ENCODE measurements at regions of chr3 and their contacts with region 1.

Region 1: GRCh38 chr3:50611464-50612233 is at the start of gene CISH:
- DNase-seq: peak; percentile 99
- H3K4me3 Mint-ChIP-seq: peak within 1 kb of the TSS; percentile 96
- H3K27ac Mint-ChIP-seq: peak within 1 kb of the TSS; percentile 100
- H3K4me1 Mint-ChIP-seq: peaks cover 36% of the 10 kb centered on the region
- H3K27me3 Mint-ChIP-seq: no peaks in the 10 kb centered on the region
- total RNA-seq, gene CISH: 136 to 138 TPM

Region 2: DNA sequence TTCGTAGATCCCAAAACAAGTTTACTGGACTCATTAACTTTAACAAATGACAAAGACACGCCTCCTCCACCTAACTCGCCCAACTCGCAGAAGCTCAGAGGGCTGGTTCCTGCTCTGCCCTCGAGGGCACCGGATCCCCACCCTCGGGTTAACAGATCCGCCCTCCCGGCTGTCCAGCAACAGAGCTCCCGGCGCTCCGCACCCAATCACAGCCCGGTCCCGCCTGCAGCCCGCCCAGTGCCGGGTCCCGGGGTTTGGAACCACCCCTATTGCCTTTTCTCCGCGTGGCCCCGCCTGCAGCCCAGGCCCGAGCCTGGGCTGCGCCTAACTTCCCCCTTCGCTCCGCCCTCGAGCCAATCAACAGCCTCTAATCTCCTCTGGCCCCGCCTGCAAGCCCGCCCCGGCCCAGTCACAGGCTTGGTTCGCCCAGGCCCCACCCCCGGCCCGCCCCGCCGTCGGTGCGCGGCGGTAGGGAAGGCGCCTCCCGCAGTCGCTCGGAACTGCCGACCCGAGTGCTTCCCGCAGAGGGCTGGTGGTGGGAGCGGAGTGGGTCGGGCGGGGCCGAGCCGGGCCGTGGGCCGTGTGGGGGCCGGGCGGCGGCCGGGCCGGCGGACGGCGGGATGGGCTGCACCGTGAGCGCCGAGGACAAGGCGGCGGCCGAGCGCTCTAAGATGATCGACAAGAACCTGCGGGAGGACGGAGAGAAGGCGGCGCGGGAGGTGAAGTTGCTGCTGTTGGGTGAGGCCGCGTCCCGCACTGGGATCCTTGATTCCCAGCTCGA is 375.7 kb before region 1 on chr3 and contains the start of gene GNAI2:
- CTCF ChIA-PET with region 1: no interaction called
- intact Hi-C with region 1: loop called (anchors 5 kb)
- DNase-seq: peak; percentile 99
- H3K4me3 Mint-ChIP-seq: peak within 1 kb of the TSS; percentile 95
- H3K27ac Mint-ChIP-seq: peak within 1 kb of the TSS; percentile 92
- H3K4me1 Mint-ChIP-seq: peaks cover 33% of the 10 kb centered on the region
- H3K27me3 Mint-ChIP-seq: no peaks in the 10 kb centered on the region
- total RNA-seq, gene GNAI2: 272 to 276 TPM

Region 3: DNA sequence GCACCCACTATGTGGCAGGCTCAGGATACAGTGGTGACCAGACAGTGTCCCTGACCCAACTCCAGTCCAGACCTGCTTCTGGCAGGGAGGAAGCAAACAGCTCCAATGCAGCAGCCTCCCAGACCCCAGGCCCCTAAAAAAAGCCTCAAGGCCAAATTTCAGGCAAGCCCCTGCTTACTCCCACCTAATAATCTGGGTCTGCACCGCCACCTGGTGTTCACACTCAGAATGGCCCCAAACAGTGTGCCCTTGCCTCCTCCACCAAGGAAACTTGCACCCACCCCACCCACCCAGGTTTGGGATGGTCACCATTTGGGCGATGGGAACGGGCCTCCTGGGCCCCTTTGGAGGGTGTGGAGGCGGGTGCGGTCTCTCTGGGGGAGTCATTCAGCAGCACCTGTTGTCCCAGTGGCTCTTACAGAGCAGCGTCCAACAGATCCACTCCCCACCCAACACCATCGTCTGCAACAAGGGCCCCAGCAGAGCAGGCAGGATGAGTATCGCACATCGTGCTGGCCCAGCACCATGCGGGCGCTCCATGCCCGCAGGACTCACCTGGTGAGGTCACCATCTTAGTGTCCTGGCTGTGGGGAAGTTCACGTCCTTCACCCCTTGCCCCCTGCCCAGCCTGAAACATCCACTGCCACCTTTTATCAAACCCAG is 61.4 kb before region 1 on chr3:
- CTCF ChIA-PET with region 1: interaction called, 5 read pairs
- intact Hi-C with region 1: loop called (anchors 1 kb)
- DNase-seq: peak; percentile 83
- H3K4me3 Mint-ChIP-seq: no peak overlapping the region
- H3K27ac Mint-ChIP-seq: no peak overlapping the region
- H3K4me1 Mint-ChIP-seq: no peaks in the 10 kb centered on the region
- H3K27me3 Mint-ChIP-seq: no peaks in the 10 kb centered on the region

Region 4: GRCh38 chr3:50627407-50628051 is 15.9 kb after region 1 on chr3:
- CTCF ChIA-PET with region 1: interaction called, 32 read pairs
- intact Hi-C with region 1: loop called (anchors 1 kb)
- DNase-seq: peak; percentile 62
- H3K4me3 Mint-ChIP-seq: no peak overlapping the region
- H3K27ac Mint-ChIP-seq: peak overlapping the region; percentile 79
- H3K4me1 Mint-ChIP-seq: peaks cover 98% of the 10 kb centered on the region
- H3K27me3 Mint-ChIP-seq: no peaks in the 10 kb centered on the region

Region 5: GRCh38 chr3:50724831-50725230 is 113.2 kb after region 1 on chr3:
- CTCF ChIA-PET with region 1: no interaction called
- intact Hi-C with region 1: no loop called
- DNase-seq: no peak
- H3K4me3 Mint-ChIP-seq: no peak overlapping the region
- H3K27ac Mint-ChIP-seq: no peak overlapping the region
- H3K4me1 Mint-ChIP-seq: no peaks in the 10 kb centered on the region
- H3K27me3 Mint-ChIP-seq: peaks cover 6% of the 10 kb centered on the region

Region 6: DNA sequence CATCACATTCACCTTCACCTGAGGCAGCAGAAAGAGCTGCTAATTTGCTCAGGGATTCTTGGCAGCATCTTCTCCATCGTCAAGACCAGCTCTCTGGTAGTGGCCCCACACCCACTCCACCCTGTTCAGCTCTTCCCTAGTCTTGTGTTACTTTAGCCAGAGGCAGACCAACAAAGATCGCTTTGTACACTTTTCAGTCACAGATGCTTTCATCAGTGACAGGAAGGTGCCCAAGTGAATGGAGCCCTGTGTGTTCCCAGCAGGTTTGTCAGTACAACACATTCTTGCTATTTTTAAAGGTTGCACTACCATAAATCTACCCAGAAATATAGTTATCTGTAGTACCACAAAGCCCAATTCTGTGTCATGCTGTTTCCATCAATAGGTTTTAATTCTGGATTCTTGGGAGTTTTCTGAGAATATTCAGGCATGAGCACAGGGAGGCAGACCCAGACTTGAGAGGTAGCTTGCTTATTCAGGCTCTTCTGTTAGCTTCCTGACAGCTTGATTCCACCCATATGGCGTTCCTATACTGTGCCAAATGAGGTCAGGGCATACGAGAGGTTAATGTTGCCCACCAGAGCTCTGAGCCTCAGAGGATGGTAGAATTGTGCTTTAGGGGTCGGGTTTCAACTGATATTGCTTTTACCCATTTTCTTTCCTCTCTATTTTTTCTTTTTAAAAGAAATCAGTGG is 663.6 kb after region 1 on chr3:
- CTCF ChIA-PET with region 1: no interaction called
- intact Hi-C with region 1: loop called (anchors 2 kb)
- DNase-seq: no peak
- H3K4me3 Mint-ChIP-seq: no peak overlapping the region
- H3K27ac Mint-ChIP-seq: no peak overlapping the region
- H3K4me1 Mint-ChIP-seq: peaks cover 24% of the 10 kb centered on the region
- H3K27me3 Mint-ChIP-seq: no peaks in the 10 kb centered on the region

Region 7: DNA sequence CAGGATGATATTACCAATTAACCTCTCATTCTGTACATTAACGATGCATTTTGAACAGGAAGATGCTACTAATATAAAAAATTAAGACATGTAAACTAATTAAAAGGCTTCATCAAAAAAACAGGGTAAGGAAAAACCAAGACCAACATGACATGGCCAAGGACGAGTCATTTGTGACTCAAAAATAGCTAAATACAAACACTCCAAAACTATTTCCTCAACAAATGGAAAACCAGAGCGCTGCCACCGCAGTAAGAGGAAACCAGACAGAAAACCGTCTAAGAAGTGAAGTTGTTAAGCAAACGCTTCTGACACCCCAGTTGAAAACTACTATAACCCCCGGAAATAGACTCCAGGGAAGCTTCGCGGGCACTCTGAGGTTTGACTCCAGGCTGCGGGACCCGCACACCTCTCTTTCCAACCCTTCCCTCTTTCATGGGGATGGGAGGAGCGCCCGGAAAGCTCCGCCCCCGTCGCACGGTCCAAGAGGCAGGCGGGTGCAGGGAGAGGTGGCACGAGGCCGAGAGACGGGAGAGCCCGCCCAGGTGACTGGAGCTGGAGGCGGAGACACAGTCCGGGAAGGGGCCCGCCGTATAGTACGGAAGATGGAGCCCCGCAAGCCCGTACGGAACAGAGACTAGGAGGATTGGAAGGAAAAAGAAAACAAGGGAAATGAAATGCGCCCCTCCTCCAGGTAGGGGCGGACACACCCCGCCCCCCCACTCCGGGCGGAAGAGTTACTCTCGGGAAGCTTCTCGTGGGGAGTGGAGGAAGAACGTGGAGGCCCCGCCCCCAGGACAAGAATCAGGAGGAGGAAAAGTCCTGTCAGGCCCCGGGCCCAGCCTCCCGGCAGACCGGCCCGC is 887.5 kb after region 1 on chr3:
- CTCF ChIA-PET with region 1: no interaction called
- intact Hi-C with region 1: loop called (anchors 2 kb)
- DNase-seq: peak; percentile 91
- H3K4me3 Mint-ChIP-seq: peak overlapping the region; percentile 98
- H3K27ac Mint-ChIP-seq: peak overlapping the region; percentile 98
- H3K4me1 Mint-ChIP-seq: peaks cover 21% of the 10 kb centered on the region
- H3K27me3 Mint-ChIP-seq: no peaks in the 10 kb centered on the region

Region 8: GRCh38 chr3:51538459-51539290 is 927.0 kb after region 1 on chr3 and contains the start of gene RAD54L2:
- CTCF ChIA-PET with region 1: no interaction called
- intact Hi-C with region 1: no loop called
- DNase-seq: peak; percentile 83
- H3K4me3 Mint-ChIP-seq: peak within 1 kb of the TSS; percentile 91
- H3K27ac Mint-ChIP-seq: peak within 1 kb of the TSS; percentile 89
- H3K4me1 Mint-ChIP-seq: peaks cover 34% of the 10 kb centered on the region
- H3K27me3 Mint-ChIP-seq: no peaks in the 10 kb centered on the region
- total RNA-seq, gene RAD54L2: 23.1 to 24.5 TPM

Measured in activated naive CD4-positive, alpha-beta T cell treated with anti-CD3 and anti-CD28 coated beads for 36 hours (primary cell).